ENCODE measurements at regions of chr15 and their contacts with region 1.

Region 1: GRCh38 chr15:85412956-85413854 is 32.8 kb downstream of the AKAP13 start:
- DNase-seq: peak; percentile 56

Region 2: GRCh38 chr15:85296615-85297402 is 116.4 kb before region 1 on chr15:
- CTCF ChIA-PET with region 1: interaction called, 35 read pairs
- POLR2A ChIA-PET with region 1: no interaction called
- DNase-seq: peak; percentile 75

Region 3: DNA sequence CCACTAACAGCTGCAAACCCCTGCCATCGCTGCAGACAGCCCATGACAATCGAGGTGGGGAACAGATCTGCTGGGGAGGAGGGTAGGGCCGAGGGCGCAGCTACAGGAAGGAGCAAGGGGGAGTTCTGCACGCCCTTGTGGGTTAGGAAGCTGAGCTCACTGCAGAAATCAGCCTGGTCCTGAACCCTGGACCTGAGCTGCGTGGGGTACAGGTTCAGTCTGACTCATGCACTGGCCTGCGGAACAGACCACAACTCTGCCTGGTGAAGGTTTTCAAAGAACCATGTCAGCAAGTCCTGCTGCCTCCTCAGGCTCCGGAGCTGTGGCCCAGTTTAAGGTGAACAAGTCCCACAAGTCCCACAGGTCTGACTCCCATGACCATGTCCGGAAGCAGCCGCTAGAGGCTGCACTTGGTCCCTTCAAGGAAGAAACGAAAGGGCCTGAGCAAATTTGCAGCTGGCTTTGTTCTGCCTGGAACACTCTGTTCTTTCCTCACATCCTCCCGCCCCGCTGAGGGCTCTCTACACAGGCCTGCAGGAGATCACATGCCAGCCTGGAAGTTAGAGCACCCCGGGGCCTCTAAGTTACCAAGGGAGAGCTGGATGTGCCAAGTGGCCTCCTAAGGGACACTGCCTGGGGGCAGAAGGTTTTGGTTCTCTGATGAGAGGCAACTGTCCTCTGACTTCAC is 82.2 kb before region 1 on chr15:
- CTCF ChIA-PET with region 1: interaction called, 28 read pairs
- POLR2A ChIA-PET with region 1: interaction called, 7 read pairs
- DNase-seq: peak; percentile 81

Region 4: DNA sequence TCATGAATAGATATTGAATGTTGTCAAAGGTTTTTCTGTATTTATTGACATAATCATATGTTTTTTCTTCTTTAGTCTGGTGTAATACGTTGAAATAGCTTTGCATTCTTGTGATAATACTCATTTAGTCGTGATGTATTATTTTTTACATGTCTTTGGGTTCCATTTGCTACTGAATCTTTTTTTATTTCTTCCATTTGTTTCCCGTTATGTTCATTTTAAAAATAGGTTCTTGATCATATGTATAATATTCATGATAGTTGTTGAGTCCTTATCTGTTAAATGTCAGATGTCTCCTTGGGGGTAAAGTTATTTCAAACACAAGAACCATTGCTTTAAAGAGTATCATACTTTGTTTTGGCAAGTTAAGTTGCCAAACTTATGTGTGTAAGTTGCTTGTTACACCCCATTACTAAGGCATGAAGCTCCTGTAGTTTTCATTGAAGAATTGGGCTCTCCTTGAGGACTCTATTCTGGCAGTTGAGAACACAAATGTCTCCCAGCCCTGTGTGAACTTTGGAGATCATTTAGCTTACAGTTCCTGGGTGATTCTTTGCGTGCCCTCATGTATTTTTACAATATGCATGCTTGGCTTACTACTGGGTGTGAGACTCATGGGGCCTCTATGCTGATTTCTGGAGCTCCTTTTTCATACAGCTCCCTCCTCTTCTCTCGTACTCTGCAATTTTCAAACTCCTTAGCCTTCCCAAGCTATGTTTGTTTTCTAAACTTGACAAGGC is 24.5 kb before region 1 on chr15:
- CTCF ChIA-PET with region 1: no interaction called
- POLR2A ChIA-PET with region 1: no interaction called
- DNase-seq: no peak

Region 5: GRCh38 chr15:85402195-85402881 is 10.9 kb before region 1 on chr15:
- CTCF ChIA-PET with region 1: interaction called, 15 read pairs
- POLR2A ChIA-PET with region 1: interaction called, 5 read pairs
- DNase-seq: no peak

Region 6: DNA sequence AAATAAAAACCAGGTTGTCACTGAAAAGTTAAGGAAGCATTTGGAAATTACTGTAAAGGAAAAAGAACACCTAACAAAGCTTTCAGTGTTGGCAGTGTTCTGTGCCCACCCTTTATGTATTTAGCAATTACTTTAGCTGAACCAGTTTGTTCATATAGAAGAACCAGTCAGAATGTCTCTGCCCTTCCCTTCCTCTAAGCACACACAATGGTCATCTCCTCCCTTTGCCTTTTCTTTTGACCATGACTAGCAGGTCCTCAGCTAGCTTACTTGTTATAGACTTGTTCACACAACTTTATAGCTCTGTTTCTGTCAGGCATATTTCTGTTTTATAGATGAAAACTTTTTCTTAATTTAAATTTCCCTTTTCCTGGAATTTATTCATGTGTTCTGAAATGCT is 26.8 kb after region 1 on chr15:
- CTCF ChIA-PET with region 1: no interaction called
- POLR2A ChIA-PET with region 1: no interaction called
- DNase-seq: no peak

Measured in HEK293T (cell line).